Posterior vena cava (tissue), 2 donors: ENCODE measurements at regions of chr5 and their contacts with region 1.

Region 1: DNA sequence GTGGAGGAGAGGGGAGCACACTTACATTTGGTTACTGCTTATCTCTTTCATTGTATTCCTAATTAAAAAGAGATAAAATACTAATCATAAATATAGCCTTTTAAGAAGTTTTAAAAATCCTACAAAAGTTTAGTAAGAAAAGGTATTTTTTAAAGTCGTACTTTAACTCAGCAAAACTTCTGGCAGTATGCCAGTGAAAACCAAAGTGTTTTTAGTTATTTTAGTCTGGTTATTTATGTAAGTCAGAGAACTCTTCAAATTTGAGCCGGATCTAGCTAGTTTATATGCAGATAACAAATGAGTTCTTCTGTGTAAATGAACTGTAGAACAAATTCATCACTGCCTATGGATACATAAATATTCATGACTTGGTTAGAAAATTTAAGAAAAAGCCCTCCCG is 36.5 kb upstream of the ANKDD1B start:
- DNase-seq: no peak

Region 2: GRCh38 chr5:74848553-74849025 is 726.2 kb before region 1 on chr5:
- intact Hi-C with region 1: loop called in 1 of 2 experiments (anchors 5 kb)
- DNase-seq: no peak

Region 3: DNA sequence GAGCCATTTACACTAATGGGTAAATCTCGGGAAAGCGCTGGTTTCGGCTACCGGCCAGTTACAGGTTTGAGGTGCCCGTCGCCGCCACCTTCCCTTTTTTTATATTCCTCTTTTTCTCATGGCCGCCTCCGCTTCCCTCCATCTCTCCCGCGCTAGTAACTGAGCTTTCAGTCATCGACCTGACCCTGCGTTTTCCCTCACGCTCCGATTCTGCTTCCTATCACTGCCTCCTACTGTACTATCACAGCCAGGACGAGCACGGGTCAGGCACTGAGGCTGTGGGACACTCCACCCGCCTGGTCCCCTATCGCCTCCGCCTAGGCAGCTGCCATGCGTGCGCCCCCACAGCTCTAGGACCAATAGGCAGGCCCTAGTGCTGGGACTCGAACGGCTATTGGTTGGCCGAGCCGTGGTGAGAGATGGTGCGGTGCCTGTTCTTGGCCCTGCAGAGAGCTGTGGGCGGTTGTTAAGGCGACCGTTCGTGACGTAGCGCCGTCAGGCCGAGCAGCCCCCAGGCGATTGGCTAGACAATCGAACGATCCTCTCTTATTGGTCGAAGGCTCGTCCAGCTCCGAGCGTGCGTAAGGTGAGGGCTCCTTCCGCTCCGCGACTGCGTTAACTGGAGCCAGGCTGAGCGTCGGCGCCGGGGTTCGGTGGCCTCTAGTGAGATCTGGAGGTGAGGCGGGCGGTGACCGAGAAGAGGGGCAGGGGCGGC is 238.0 kb before region 1 on chr5 and contains the start of gene HMGCR:
- intact Hi-C with region 1: no loop called
- DNase-seq: peak; percentile 99
- total RNA-seq, gene HMGCR: 15.1 to 22.9 TPM